ENCODE measurements at regions of chr20 and their contacts with region 1.

Region 1: DNA sequence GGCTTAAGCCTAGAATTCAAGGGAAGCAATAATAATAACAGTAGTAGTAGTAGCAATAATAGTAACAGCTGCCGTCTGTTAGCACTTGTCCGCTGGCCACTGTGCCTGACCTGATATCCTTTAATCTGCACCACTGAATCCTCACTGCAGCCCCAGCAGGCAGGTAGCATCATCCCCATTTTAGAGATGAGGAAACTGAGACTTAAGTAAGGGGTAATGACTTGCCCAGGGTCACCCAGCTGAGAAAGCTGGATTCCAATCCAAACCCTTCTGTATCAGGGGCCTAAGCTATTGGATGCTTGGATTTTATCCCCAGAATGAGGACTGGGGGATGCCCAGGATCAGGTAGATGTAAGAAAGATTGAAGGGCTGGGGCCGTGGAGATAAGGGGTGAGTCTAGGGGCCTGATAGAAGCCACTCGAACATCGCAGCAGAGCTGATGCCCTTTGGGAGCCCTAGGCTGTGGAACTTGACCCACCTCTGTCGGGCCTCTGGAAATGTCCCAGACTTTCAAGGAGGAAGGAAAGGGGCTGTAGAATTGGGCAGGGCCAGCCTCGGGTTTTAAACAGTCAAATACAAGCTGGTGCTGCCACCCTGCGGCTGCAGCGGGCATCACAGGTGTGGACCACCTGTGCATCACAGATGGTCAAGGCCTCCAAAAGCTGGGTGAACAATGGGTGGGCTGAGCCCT is 102.1 kb upstream of the MYL9 start:
- DNase-seq: peak; percentile 89
- H3K4me3 Mint-ChIP-seq: no peak overlapping the region
- H3K27ac Mint-ChIP-seq: no peak overlapping the region
- H3K4me1 Mint-ChIP-seq: no peaks in the 10 kb centered on the region
- H3K27me3 Mint-ChIP-seq: peaks cover 32% of the 10 kb centered on the region
- CTCF ChIP-seq: peak; percentile 99

Region 2: GRCh38 chr20:36064658-36065426 is 374.3 kb before region 1 on chr20:
- CTCF ChIA-PET with region 1: no interaction called
- intact Hi-C with region 1: no loop called
- DNase-seq: peak; percentile 100
- H3K4me3 Mint-ChIP-seq: peak overlapping the region; percentile 95
- H3K27ac Mint-ChIP-seq: peak overlapping the region; percentile 91
- H3K4me1 Mint-ChIP-seq: peaks cover 35% of the 10 kb centered on the region
- H3K27me3 Mint-ChIP-seq: no peaks in the 10 kb centered on the region
- CTCF ChIP-seq: no peak

Region 3: GRCh38 chr20:36154700-36155628 is 284.2 kb before region 1 on chr20 and contains the start of gene EPB41L1:
- CTCF ChIA-PET with region 1: no interaction called
- intact Hi-C with region 1: loop called (anchors 5 kb)
- DNase-seq: no peak
- H3K4me3 Mint-ChIP-seq: peak within 1 kb of the TSS; percentile 65
- H3K27ac Mint-ChIP-seq: peak within 1 kb of the TSS; percentile 9
- H3K4me1 Mint-ChIP-seq: peaks cover 34% of the 10 kb centered on the region
- H3K27me3 Mint-ChIP-seq: no peaks in the 10 kb centered on the region
- CTCF ChIP-seq: no peak
- total RNA-seq, gene EPB41L1: 121 and 184 TPM in 2 replicates

Region 4: GRCh38 chr20:36199345-36200257 is 239.6 kb before region 1 on chr20:
- CTCF ChIA-PET with region 1: interaction called, 9 read pairs
- intact Hi-C with region 1: loop called (anchors 1 kb)
- DNase-seq: peak; percentile 92
- H3K4me3 Mint-ChIP-seq: no peak overlapping the region
- H3K27ac Mint-ChIP-seq: no peak overlapping the region
- H3K4me1 Mint-ChIP-seq: no peaks in the 10 kb centered on the region
- H3K27me3 Mint-ChIP-seq: no peaks in the 10 kb centered on the region
- CTCF ChIP-seq: peak; percentile 98

Region 5: GRCh38 chr20:36273414-36274180 is 165.6 kb before region 1 on chr20:
- CTCF ChIA-PET with region 1: interaction called, 22 read pairs
- intact Hi-C with region 1: loop called (anchors 1 kb)
- DNase-seq: peak; percentile 46
- H3K4me3 Mint-ChIP-seq: no peak overlapping the region
- H3K27ac Mint-ChIP-seq: no peak overlapping the region
- H3K4me1 Mint-ChIP-seq: no peaks in the 10 kb centered on the region
- H3K27me3 Mint-ChIP-seq: peaks cover 92% of the 10 kb centered on the region
- CTCF ChIP-seq: peak; percentile 58

Region 6: DNA sequence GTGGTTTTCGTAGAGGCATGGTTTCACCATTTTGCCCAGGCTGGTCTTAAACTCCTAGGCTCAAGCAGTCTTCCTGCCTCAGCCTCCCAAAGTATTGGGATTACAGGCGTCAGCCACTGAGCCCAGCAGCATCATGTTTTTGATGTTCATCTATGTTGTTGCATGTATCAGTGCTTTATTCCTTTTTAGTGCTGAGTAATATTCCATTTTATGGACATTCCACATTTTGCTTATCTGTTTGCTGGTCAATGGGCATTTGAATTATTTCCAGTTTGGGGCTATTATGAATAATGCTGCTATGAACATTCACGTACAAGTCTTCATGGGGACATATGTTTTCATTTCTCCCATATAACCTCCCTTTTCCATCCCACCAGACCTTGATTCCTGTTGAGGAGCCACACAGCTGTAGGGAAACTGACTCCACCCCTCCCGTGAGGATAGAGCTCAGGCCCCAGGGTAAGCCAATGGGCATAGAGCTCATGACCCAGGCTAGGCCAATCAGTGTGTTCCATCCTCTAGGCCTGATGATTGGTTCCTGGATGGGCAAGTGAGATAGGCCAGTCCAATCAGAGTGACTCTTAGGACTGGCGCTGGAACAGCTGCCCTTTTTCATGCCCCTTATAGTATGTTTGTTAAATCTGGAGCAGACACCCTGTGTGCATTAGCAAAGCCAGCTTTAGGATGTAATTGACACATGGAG is 83.6 kb before region 1 on chr20:
- CTCF ChIA-PET with region 1: no interaction called
- intact Hi-C with region 1: no loop called
- DNase-seq: no peak
- H3K4me3 Mint-ChIP-seq: no peak overlapping the region
- H3K27ac Mint-ChIP-seq: no peak overlapping the region
- H3K4me1 Mint-ChIP-seq: no peaks in the 10 kb centered on the region
- H3K27me3 Mint-ChIP-seq: peaks cover 86% of the 10 kb centered on the region
- CTCF ChIP-seq: no peak